ENCODE measurements at regions of chr4 and their contacts with region 1.

Region 1: DNA sequence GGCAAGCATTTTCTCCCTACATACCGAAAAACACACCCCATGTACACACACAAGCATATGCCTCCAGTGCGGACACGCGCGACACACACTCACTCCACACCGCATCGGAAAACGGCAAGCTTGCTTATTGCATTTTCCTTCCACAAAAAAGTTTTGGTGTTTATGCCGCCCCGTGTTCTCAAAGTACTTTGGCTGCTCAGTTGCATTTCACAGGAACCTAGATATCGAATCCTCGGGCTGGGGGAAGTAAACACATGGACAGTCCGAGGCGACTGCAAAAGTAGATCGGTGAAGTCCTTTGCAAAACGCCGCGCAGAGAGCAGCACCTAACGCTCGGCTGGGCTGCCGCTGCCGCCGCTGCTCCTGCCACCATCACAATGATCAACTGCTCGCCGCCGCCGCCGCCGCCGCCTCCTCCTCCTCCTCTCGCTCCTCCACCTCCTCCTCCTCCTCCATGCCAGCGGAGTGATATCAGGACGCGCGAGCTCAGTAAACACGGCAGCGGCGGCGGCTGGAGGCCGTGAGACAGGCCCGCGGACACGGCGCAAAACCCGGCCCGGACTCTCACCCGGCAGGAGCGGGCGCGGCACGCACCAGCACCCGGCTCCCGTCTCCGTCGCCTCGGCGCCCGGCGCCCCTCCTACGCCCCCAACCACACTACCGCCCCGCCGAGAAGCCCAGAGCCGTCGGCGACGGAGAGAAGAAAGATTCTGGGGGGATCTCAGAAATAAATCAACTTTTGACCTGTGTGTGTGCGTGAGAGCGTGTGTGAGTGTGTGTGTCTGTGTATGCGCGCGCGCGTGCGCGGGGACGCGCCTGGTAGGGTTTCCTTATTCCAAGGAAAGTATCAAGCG is at the start of gene MAML3:
- DNase-seq: peak; percentile 66 to 96
- H3K4me3 ChIP-seq: peak within 1 kb of the TSS; percentile 79 to 91
- H3K27ac ChIP-seq: peak within 1 kb of the TSS; percentile 94 to 97
- H3K4me1 ChIP-seq: peaks cover 0 to 4% of the 10 kb centered on the region in 2 donors
- H3K27me3 ChIP-seq: no peaks in the 10 kb centered on the region
- CTCF ChIP-seq: no peak
- total RNA-seq, gene MAML3: 4.7 TPM

Region 2: GRCh38 chr4:139177868-139178611 is 975.9 kb before region 1 on chr4:
- intact Hi-C with region 1: loop called (anchors 5 kb)
- DNase-seq: peak; percentile 85 to 98
- H3K4me3 ChIP-seq: peak overlapping the region; percentile 97
- H3K27ac ChIP-seq: peak overlapping the region; percentile 100
- H3K4me1 ChIP-seq: peaks cover 0 to 6% of the 10 kb centered on the region in 2 donors
- H3K27me3 ChIP-seq: no peaks in the 10 kb centered on the region
- CTCF ChIP-seq: peak in 1 of 3 experiments; percentile 5

Region 3: GRCh38 chr4:139665690-139666529 is 488.0 kb before region 1 on chr4 and contains the start of gene MGST2:
- intact Hi-C with region 1: loop called (anchors 5 kb)
- DNase-seq: peak in 1 of 2 donors; percentile 81
- H3K4me3 ChIP-seq: peak within 1 kb of the TSS; percentile 61 to 64
- H3K27ac ChIP-seq: peak within 1 kb of the TSS; percentile 69 to 88
- H3K4me1 ChIP-seq: peaks cover 2 to 9% of the 10 kb centered on the region in 2 donors
- H3K27me3 ChIP-seq: no peaks in the 10 kb centered on the region
- CTCF ChIP-seq: no peak
- total RNA-seq, gene MGST2: 34.4 TPM

Region 4: DNA sequence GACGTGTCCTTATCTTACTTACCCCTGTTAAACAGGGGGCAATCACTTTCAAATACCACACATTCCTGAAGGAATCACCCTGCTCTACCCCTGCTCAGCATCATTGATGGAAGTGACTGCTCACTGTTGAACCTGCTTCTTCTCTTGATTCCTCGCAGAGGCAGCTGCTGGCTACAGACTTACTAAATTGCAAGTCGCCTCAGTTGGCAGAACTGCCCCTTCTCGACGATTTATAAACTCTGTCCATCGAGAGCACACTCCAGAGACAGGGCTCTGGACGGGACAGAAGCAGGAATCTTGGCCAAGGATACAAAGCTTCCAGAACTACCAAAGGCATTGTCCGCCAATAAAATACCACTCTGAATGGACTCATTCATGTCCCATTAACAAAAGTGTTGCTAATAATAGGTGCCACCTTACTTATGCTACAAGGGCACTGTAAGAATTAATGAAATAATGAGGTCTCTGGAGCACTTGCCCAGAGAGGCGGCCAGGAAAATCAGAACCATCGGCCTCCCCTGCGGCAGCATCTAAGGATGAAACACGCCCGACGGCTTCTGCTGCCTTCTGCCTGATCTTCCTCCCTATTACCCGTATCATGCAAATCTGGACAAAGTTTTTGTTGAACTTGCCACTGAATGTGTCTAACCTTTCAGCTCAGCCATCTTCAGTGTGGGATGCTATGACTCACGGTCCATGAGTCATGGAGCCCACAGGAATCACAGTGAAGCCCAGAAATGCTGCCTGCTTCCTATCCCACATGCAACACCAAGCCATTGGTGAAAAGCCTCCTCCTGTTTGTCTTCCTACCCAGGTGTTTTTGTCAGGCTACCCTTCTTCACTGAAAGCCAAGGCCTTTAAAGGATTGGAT is 164.8 kb before region 1 on chr4:
- intact Hi-C with region 1: no loop called
- DNase-seq: peak; percentile 33 to 87
- H3K4me3 ChIP-seq: no peak overlapping the region
- H3K27ac ChIP-seq: no peak overlapping the region
- H3K4me1 ChIP-seq: peaks cover 7 to 21% of the 10 kb centered on the region in 2 donors
- H3K27me3 ChIP-seq: no peaks in the 10 kb centered on the region
- CTCF ChIP-seq: no peak

Region 5: DNA sequence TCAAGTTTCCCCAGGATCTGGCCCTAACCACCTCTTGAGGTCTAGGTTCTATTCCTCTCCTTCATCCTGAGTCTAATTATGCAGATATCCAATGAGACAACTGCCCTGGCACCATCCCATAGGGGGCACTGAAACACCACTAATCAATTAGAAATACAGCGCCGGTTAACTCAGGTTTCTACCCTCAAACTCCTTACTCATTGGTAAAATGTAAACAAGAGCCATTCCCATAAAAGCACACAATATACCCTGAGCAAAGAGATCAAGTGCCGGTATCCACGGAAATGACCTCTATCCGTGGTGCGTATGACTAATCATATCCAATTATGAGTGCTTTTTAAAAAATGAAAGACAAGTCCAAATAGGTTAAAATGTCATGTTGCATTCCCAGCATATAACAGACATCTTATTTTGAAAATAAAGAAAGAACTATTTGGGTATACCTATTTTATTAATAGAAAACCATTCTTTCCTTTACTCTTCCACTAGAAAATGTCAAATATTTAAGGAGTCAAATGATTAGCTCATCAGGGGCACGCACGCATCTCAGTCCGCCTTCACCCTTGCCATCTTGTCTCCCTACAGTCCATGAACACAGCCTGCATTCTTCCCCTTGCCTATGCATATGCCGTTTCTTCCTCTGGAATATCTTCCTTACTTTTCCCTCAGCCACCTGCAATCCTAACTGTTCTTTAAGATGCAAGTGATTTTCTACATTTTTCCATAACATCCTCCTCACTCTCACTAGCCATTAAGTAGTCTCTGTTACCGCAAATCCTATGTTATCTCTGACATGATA is 141.1 kb before region 1 on chr4:
- intact Hi-C with region 1: loop called (anchors 1 kb)
- DNase-seq: peak in 1 of 2 donors; percentile 75
- H3K4me3 ChIP-seq: peak overlapping the region in 1 of 2 donors; percentile 20
- H3K27ac ChIP-seq: no peak overlapping the region
- H3K4me1 ChIP-seq: peaks cover 0 to 5% of the 10 kb centered on the region in 2 donors
- H3K27me3 ChIP-seq: no peaks in the 10 kb centered on the region
- CTCF ChIP-seq: peak; percentile 34 to 53 (median 50)

Region 6: GRCh38 chr4:140085062-140085622 is 68.8 kb before region 1 on chr4:
- intact Hi-C with region 1: loop called (anchors 5 kb)
- DNase-seq: no peak
- H3K4me3 ChIP-seq: peak overlapping the region in 1 of 2 donors; percentile 43
- H3K27ac ChIP-seq: peak overlapping the region; percentile 65 to 66
- H3K4me1 ChIP-seq: peaks cover 0 to 23% of the 10 kb centered on the region in 2 donors
- H3K27me3 ChIP-seq: no peaks in the 10 kb centered on the region
- CTCF ChIP-seq: no peak

Region 7: DNA sequence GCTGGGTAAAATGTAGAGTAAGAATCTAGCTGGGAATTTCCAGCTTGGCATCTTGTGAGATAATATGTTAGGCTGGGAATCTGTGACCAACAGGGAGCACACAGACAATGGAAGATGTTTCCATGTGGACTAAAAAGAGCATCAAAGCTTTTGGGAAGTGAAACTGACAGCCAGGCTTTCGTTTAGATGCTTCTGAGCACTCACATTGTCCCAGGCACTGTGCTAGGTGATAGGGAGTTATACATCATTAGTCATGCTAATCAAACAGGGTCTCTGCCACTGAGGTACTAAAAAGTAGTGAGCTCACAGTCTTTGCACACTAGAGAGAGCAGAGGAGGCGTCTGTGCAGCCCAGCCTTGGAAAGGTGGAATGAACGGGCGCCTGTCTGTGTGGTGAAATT is 117.6 kb after region 1 on chr4:
- intact Hi-C with region 1: no loop called
- DNase-seq: no peak
- H3K4me3 ChIP-seq: no peak overlapping the region
- H3K27ac ChIP-seq: no peak overlapping the region
- H3K4me1 ChIP-seq: no peaks in the 10 kb centered on the region
- H3K27me3 ChIP-seq: no peaks in the 10 kb centered on the region
- CTCF ChIP-seq: no peak

Measured in ascending aorta (tissue), 2 donors.